ENCODE measurements at regions of chr12 and their contacts with region 1.

Region 1: GRCh38 chr12:77049767-77050353 is 15.5 kb downstream of the E2F7 start:
- DNase-seq: peak; percentile 23
- H3K4me3 ChIP-seq: no peak overlapping the region
- H3K27ac ChIP-seq: no peak overlapping the region
- H3K27me3 ChIP-seq: no peaks in the 10 kb centered on the region
- CTCF ChIP-seq: peak; percentile 89

Region 2: GRCh38 chr12:77031745-77032144 is 18.1 kb before region 1 on chr12:
- CTCF ChIA-PET with region 1: interaction called, 14 read pairs
- POLR2A ChIA-PET with region 1: no interaction called
- DNase-seq: no peak
- H3K4me3 ChIP-seq: no peak overlapping the region
- H3K27ac ChIP-seq: no peak overlapping the region
- H3K27me3 ChIP-seq: no peaks in the 10 kb centered on the region
- CTCF ChIP-seq: no peak

Region 3: DNA sequence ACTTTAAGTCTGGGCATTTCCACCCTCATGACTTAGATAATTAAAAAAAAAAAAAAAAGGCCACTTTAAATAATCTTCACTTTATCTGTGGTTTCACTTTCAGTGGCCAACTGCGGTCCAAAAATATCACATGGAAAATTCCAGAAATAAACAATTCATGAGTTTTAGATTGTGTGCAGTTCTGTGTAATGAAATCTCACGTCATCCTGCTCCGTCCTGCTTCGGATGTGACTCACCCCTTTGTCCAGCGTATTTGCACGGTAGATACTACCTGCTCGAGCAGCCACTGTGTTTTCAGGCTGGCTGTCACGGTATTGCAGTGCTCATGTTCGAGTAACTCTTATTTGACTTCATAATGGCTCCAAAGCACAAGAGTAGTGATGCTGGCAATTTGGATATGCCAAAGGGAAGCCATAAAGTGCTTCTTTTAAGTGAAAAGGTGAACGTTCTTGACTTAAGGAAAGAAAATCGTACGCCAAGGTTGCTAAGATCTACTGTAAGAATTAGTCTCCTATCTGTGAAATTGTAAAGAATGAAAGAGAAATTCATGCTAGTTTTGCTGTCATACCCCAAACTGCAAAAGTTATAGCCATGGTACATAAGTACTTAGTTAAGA is 13.1 kb after region 1 on chr12:
- CTCF ChIA-PET with region 1: interaction called, 41 read pairs
- POLR2A ChIA-PET with region 1: no interaction called
- DNase-seq: peak; percentile 29
- H3K4me3 ChIP-seq: peak overlapping the region; percentile 48
- H3K27ac ChIP-seq: peak overlapping the region; percentile 13
- H3K27me3 ChIP-seq: no peaks in the 10 kb centered on the region
- CTCF ChIP-seq: no peak

Region 4: GRCh38 chr12:77102691-77103090 is 52.8 kb after region 1 on chr12:
- CTCF ChIA-PET with region 1: interaction called, 16 read pairs
- POLR2A ChIA-PET with region 1: no interaction called
- DNase-seq: no peak
- H3K4me3 ChIP-seq: no peak overlapping the region
- H3K27ac ChIP-seq: no peak overlapping the region
- H3K27me3 ChIP-seq: no peaks in the 10 kb centered on the region
- CTCF ChIP-seq: no peak

Region 5: GRCh38 chr12:77685112-77685511 is 635.3 kb after region 1 on chr12:
- CTCF ChIA-PET with region 1: interaction called, 29 read pairs
- POLR2A ChIA-PET with region 1: no interaction called
- DNase-seq: peak; percentile 62
- H3K4me3 ChIP-seq: no peak overlapping the region
- H3K27ac ChIP-seq: no peak overlapping the region
- H3K27me3 ChIP-seq: no peaks in the 10 kb centered on the region
- CTCF ChIP-seq: peak; percentile 77

Measured in AG04450 (cell line).